ENCODE measurements at regions of chr6 and their contacts with region 1.

Region 1: DNA sequence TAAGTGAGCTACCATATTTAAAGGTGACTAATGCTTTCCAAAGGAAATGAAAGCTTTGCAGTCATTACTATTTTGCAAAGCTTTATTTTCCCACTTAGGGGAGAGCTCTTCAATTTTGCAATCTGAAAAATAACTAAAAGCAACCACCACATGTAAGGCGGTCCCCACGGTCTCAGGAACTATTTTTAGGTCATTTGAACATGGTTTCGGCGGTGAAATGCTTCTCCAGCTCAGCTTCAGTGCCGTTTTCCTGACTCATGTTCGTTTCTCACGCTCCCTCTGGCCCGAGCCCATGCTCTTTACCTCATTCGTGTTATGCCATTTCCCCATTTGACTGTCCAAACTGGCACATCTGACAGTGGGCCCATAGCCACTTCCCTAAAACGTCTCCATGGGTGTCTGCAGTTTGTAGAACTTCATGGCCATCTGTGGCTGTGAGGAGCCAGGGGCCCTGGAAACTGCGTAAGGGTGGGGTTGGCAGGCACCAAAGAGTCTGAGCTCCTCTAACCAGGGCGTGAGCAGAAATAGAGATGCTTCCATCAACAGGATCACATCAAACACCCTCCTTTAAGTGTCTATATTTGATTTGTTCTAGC is 46.5 kb downstream of the ADTRP start:
- DNase-seq: peak; percentile 99
- ATAC-seq: peak; percentile 87
- H3K4me3 ChIP-seq: no peak overlapping the region
- H3K27ac ChIP-seq: peak overlapping the region; percentile 89
- H3K4me1 ChIP-seq: peaks cover 43% of the 10 kb centered on the region
- H3K27me3 ChIP-seq: no peaks in the 10 kb centered on the region
- CTCF ChIP-seq: no peak
- EP300 ChIP-seq: peak; percentile 86 to 94
- POLR2A ChIP-seq: peak; percentile 56
- RAD21 ChIP-seq: peak; percentile 47

Region 2: DNA sequence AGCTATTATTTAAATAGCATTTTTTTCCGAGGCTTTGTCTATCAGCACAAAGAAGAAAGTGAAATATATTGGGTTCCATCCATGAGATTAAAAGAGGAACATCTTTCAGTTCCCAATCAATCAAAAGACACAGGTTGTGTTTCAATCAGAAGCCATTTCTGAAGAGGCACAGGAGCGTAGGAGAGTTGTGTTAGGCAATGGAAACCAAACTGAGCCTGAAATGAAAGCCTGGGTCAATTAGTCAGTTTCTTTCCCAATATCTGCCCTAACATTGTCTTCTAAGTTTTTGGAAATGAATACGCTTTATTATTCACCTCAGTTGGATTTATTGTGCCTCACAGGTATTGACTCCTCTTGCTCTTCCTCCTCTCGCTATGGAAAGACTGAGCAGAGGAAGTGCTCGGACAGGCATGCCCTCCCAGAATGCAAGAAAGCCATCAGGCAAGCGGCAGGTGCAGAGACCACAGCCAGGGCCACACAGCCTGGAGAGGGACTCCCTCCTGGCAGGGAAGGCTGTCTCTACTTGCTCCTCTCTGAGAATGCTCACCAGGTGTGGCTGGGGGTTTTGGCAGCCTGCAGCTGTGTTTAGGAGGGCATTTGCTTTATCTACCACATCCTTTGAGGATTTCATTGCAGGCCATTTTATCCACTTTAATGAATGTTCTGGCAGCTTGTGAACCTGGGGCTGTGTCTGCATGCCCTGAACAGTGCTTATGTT is 398.8 kb before region 1 on chr6:
- CTCF ChIA-PET with region 1: no interaction called
- POLR2A ChIA-PET with region 1: no interaction called
- RAD21 ChIA-PET with region 1: no interaction called
- SMC1A ChIA-PET with region 1: no interaction called
- in situ Hi-C with region 1: no loop called
- intact Hi-C with region 1: no loop called
- DNase-seq: no peak
- ATAC-seq: peak; percentile 61
- H3K4me3 ChIP-seq: no peak overlapping the region
- H3K27ac ChIP-seq: peak overlapping the region; percentile 33
- H3K4me1 ChIP-seq: peaks cover 26% of the 10 kb centered on the region
- H3K27me3 ChIP-seq: no peaks in the 10 kb centered on the region
- CTCF ChIP-seq: no peak
- EP300 ChIP-seq: no peak
- POLR2A ChIP-seq: peak; percentile 39; the same call in 1 of the 2 replicates
- RAD21 ChIP-seq: no peak

Region 3: DNA sequence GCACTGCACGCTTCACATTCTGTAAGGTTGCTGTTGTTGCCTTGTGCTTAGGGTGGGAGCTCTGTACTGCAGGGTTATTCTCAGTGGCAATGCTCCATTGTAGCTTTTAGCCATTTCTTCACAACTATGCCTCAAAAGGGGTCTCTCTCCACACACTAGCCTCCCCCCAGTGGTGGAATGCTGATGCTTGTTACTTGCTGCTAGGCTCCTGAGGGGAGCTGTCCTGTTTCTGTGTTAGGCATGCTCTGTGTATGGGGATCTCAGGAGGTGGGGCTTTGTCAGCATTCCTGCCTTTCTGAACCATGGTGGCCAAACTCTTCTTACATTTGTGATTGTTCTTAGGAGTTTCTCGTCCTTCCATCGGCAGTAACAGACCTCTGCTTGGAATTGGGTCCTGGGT is 175.8 kb before region 1 on chr6:
- CTCF ChIA-PET with region 1: no interaction called
- POLR2A ChIA-PET with region 1: no interaction called
- RAD21 ChIA-PET with region 1: no interaction called
- SMC1A ChIA-PET with region 1: no interaction called
- in situ Hi-C with region 1: no loop called
- intact Hi-C with region 1: no loop called
- DNase-seq: no peak
- ATAC-seq: no peak
- H3K4me3 ChIP-seq: no peak overlapping the region
- H3K27ac ChIP-seq: no peak overlapping the region
- H3K4me1 ChIP-seq: no peaks in the 10 kb centered on the region
- H3K27me3 ChIP-seq: no peaks in the 10 kb centered on the region
- CTCF ChIP-seq: no peak
- EP300 ChIP-seq: no peak
- POLR2A ChIP-seq: no peak
- RAD21 ChIP-seq: no peak

Region 4: GRCh38 chr6:11700118-11700718 is 31.9 kb before region 1 on chr6:
- CTCF ChIA-PET with region 1: interaction called, 6 read pairs
- POLR2A ChIA-PET with region 1: no interaction called
- RAD21 ChIA-PET with region 1: interaction called, 11 read pairs
- SMC1A ChIA-PET with region 1: interaction called, 5 read pairs
- in situ Hi-C with region 1: no loop called
- intact Hi-C with region 1: no loop called
- DNase-seq: no peak
- ATAC-seq: peak; percentile 70
- H3K4me3 ChIP-seq: no peak overlapping the region
- H3K27ac ChIP-seq: no peak overlapping the region
- H3K4me1 ChIP-seq: peaks cover 4% of the 10 kb centered on the region
- H3K27me3 ChIP-seq: no peaks in the 10 kb centered on the region
- CTCF ChIP-seq: peak; percentile 35 to 50 (median 35); a peak in 3 of 6 replicates
- EP300 ChIP-seq: no peak
- POLR2A ChIP-seq: no peak
- RAD21 ChIP-seq: peak; percentile 82

Region 5: DNA sequence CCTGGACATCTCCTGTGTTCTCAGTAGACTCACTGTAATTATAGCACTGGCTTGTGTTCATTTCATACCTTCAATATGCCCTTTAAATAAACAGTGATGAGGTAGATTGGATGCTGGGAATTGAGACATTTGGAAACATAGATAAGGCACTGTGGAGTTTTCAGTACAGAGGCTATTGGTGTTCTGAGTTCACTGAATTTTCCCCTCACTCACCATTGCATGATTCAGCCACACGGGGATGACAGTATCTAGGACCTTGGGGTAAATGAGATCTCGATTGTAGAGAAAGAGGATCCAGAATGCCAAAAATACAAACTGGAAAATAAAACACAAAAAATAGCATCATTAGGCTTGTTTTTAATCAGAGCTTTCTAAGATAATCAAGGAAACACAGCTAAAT is 33.9 kb after region 1 on chr6:
- CTCF ChIA-PET with region 1: interaction called, 6 read pairs
- POLR2A ChIA-PET with region 1: no interaction called
- RAD21 ChIA-PET with region 1: interaction called, 4 read pairs
- SMC1A ChIA-PET with region 1: interaction called, 11 read pairs
- in situ Hi-C with region 1: no loop called
- intact Hi-C with region 1: no loop called
- DNase-seq: no peak
- ATAC-seq: no peak
- H3K4me3 ChIP-seq: no peak overlapping the region
- H3K27ac ChIP-seq: no peak overlapping the region
- H3K4me1 ChIP-seq: peaks cover 11% of the 10 kb centered on the region
- H3K27me3 ChIP-seq: no peaks in the 10 kb centered on the region
- CTCF ChIP-seq: no peak
- EP300 ChIP-seq: no peak
- POLR2A ChIP-seq: no peak
- RAD21 ChIP-seq: peak; percentile 64

Region 6: DNA sequence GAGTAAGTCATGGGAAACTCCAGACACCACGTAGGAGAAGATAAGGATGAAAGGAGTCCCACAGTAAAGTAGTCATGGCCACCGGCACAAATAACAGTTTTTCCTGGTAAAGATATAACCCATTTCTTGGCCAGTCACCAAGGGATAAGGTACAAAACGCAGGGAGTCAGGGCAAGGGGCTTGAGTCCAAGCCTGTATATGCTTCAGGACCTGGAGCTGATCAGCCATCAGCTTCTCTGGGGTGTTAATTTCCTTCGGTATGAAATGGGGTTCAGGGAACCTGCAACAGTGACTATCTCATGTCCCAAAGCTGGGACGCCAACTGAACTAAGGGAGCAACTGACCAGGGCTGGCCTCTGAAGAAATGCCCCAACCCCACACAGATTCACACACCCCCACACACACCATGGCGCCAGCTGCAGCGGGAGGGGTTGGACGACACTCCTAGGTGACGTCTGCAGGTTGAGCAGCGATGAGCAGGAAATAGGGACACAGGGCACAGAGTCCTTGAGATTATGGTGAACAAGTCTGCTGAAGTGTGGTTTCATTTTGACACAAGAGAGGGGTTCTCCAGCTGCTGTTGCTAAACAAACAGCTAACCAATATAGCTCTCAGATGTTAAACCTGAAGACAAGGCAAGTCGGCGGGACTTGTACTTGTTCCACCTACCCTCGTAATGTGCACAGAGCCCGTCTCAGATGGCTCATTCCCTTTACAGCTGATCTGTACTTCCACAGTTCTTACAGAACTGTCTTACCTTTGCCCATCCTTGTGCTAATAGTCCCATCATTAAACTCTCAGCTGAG is 53.8 kb after region 1 on chr6:
- CTCF ChIA-PET with region 1: interaction called, 15 read pairs
- POLR2A ChIA-PET with region 1: interaction called, 16 read pairs
- RAD21 ChIA-PET with region 1: interaction called, 54 read pairs
- SMC1A ChIA-PET with region 1: interaction called, 57 read pairs
- in situ Hi-C with region 1: no loop called
- intact Hi-C with region 1: loop called (anchors 5 kb)
- DNase-seq: peak; percentile 93
- ATAC-seq: peak; percentile 93
- H3K4me3 ChIP-seq: peak overlapping the region; percentile 46
- H3K27ac ChIP-seq: peak overlapping the region; percentile 89
- H3K4me1 ChIP-seq: peaks cover 25% of the 10 kb centered on the region
- H3K27me3 ChIP-seq: no peaks in the 10 kb centered on the region
- CTCF ChIP-seq: no peak
- EP300 ChIP-seq: peak; percentile 83 to 92
- POLR2A ChIP-seq: peak; percentile 66
- RAD21 ChIP-seq: peak; percentile 27; the same call in 1 of the 2 replicates

Region 7: DNA sequence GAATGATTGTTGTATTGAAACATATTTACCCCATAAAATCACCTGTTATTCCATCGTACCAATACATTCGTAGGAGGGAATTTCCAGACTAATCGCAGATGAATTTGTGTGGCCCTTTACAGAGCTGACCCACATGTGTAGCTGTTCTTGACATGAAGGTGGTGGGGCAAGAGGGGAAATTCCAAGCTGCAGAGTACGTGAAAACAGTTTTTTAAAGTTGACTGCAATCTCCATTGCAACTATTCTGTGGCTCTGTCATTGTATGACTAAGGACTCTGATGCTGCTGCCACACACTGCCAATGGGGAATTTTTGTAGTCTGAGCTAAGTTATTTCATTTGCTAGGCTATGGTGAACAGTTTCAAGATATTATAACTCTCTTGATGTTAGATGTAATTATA is 92.9 kb after region 1 on chr6:
- CTCF ChIA-PET with region 1: interaction called, 3 read pairs
- POLR2A ChIA-PET with region 1: interaction called, 6 read pairs
- RAD21 ChIA-PET with region 1: interaction called, 46 read pairs
- SMC1A ChIA-PET with region 1: interaction called, 26 read pairs
- in situ Hi-C with region 1: no loop called
- intact Hi-C with region 1: loop called (anchors 1 kb)
- DNase-seq: peak; percentile 91
- ATAC-seq: peak; percentile 86
- H3K4me3 ChIP-seq: no peak overlapping the region
- H3K27ac ChIP-seq: peak overlapping the region; percentile 70
- H3K4me1 ChIP-seq: peaks cover 47% of the 10 kb centered on the region
- H3K27me3 ChIP-seq: no peaks in the 10 kb centered on the region
- CTCF ChIP-seq: no peak
- EP300 ChIP-seq: peak; percentile 90; a peak in 3 of 4 replicates
- POLR2A ChIP-seq: no peak
- RAD21 ChIP-seq: peak; percentile 14

Region 8: DNA sequence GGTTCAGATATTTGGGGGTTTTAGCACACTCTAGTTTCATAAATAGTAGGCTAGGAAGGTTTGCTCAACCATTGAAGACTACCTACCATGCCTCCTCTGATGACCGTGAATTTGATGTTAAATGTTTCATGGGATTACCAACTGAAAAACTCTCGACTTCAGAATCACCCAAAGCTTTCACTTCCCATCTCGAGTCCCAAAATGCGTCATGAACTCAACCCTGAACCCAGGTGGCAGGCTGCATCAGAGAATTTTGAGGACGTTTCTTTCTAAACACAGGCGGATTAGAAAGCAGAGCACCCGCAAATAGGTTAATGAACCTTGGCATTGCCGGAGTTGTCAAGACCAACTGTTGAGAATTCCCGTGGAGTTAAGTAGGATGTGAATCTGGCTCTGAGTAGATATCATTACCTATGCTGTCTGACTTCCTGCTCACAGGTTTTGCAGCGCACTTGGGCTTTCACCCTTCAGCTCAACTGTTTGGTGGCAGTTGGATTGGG is 144.8 kb after region 1 on chr6:
- CTCF ChIA-PET with region 1: interaction called, 3 read pairs
- POLR2A ChIA-PET with region 1: interaction called, 4 read pairs
- RAD21 ChIA-PET with region 1: interaction called, 6 read pairs
- SMC1A ChIA-PET with region 1: interaction called, 8 read pairs
- in situ Hi-C with region 1: no loop called
- intact Hi-C with region 1: loop called (anchors 1 kb)
- DNase-seq: peak; percentile 91
- ATAC-seq: peak; percentile 90
- H3K4me3 ChIP-seq: peak overlapping the region; percentile 22; the same call in 1 of the 2 replicates
- H3K27ac ChIP-seq: peak overlapping the region; percentile 82
- H3K4me1 ChIP-seq: peaks cover 19% of the 10 kb centered on the region
- H3K27me3 ChIP-seq: no peaks in the 10 kb centered on the region
- CTCF ChIP-seq: no peak
- EP300 ChIP-seq: peak; percentile 92 to 94; a peak in 3 of 4 replicates
- POLR2A ChIP-seq: no peak
- RAD21 ChIP-seq: no peak; the same call in 1 of the 2 replicates

Measured in GM12878 (cell line).